ENCODE measurements at regions of chr9 and their contacts with region 1.

Region 1: DNA sequence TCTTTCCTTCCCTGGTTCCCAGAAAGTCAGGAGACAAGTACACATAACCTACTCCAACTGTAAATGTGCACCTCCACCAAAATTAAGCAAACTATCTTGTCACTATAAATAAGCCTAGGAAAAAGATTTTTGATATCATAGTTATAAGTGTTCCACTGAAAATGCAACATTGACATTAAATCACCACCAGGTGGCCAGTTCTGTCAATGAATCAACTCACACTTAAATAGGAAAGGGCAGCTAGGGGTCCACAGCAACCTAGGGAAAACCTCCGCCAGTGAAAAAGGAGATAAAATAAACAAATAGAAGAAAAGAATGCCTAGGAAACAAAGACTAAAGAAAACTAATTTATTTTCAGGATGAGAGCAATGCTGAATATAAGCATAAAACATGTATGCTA is 243.1 kb upstream of the PTPRD start:
- DNase-seq: no peak
- H3K4me3 ChIP-seq: no peak overlapping the region
- H3K27ac ChIP-seq: no peak overlapping the region
- H3K4me1 ChIP-seq: no peaks in the 10 kb centered on the region
- H3K27me3 ChIP-seq: no peaks in the 10 kb centered on the region
- CTCF ChIP-seq: no peak
- POLR2A ChIP-seq: no peak

Region 2: GRCh38 chr9:9552665-9553064 is 1303.2 kb before region 1 on chr9:
- intact Hi-C with region 1: no loop called
- DNase-seq: no peak
- H3K4me3 ChIP-seq: no peak overlapping the region
- H3K27ac ChIP-seq: no peak overlapping the region
- H3K4me1 ChIP-seq: no peaks in the 10 kb centered on the region
- H3K27me3 ChIP-seq: no peaks in the 10 kb centered on the region
- CTCF ChIP-seq: no peak
- POLR2A ChIP-seq: no peak

Region 3: DNA sequence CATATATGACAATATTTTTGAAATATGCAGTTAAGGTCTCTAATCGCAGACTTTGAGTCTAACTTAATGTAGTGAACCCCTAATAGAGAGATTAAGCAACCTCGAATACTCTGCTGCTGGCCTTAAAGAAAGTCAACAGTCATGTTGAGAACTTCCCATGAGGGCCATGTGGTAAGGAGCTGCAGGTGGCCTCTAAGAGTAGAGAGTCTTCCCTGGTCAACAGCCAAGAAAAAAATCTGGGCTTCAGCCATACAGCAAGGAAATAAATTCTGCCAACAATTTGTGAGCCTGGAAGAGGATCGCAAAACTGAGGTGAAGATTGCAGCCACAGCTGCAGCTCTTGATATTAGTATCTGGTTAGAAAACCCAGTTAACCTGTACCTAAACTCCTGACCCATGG is 902.2 kb after region 1 on chr9:
- intact Hi-C with region 1: loop called (anchors 5 kb)
- DNase-seq: no peak
- H3K4me3 ChIP-seq: no peak overlapping the region
- H3K27ac ChIP-seq: no peak overlapping the region
- H3K4me1 ChIP-seq: no peaks in the 10 kb centered on the region
- H3K27me3 ChIP-seq: no peaks in the 10 kb centered on the region
- CTCF ChIP-seq: no peak
- POLR2A ChIP-seq: no peak